Activated CD4-positive, alpha-beta T cell treated with anti-CD3 and anti-CD28 coated beads for 36 hours (primary cell): ENCODE measurements at regions of chr1 and their contacts with region 1.

Region 1: GRCh38 chr1:32817159-32817814 is at the starts of genes S100PBP and YARS1:
- DNase-seq: peak; percentile 100
- ATAC-seq: peak; percentile 96
- H3K4me3 Mint-ChIP-seq: peak within 1 kb of the TSS; percentile 97
- H3K27ac Mint-ChIP-seq: peak within 1 kb of the TSS; percentile 99
- H3K4me1 Mint-ChIP-seq: peaks cover 48% of the 10 kb centered on the region
- H3K27me3 Mint-ChIP-seq: no peaks in the 10 kb centered on the region
- total RNA-seq, gene S100PBP: 27.9 to 34.3 TPM
- total RNA-seq, gene YARS1: 259 to 309 TPM

Region 2: GRCh38 chr1:31644560-31645273 is 1172.6 kb before region 1 on chr1 and contains the start of gene PEF1:
- CTCF ChIA-PET with region 1: no interaction called
- POLR2A ChIA-PET with region 1: no interaction called
- intact Hi-C with region 1: loop called in 1 of 2 experiments (anchors 10 kb)
- DNase-seq: peak; percentile 100
- ATAC-seq: peak; percentile 91
- H3K4me3 Mint-ChIP-seq: peak within 1 kb of the TSS; percentile 95
- H3K27ac Mint-ChIP-seq: peak within 1 kb of the TSS; percentile 100
- H3K4me1 Mint-ChIP-seq: peaks cover 23% of the 10 kb centered on the region
- H3K27me3 Mint-ChIP-seq: no peaks in the 10 kb centered on the region
- total RNA-seq, gene PEF1: 48.8 to 59.3 TPM

Region 3: GRCh38 chr1:32221980-32222755 is 595.1 kb before region 1 on chr1 and contains the starts of genes EIF3I and TMEM234:
- CTCF ChIA-PET with region 1: no interaction called
- POLR2A ChIA-PET with region 1: no interaction called
- intact Hi-C with region 1: loop called in 1 of 2 experiments (anchors 1 kb)
- DNase-seq: peak; percentile 95
- ATAC-seq: peak; percentile 95
- H3K4me3 Mint-ChIP-seq: peak within 1 kb of the TSS; percentile 96
- H3K27ac Mint-ChIP-seq: peak within 1 kb of the TSS; percentile 97
- H3K4me1 Mint-ChIP-seq: peaks cover 29% of the 10 kb centered on the region
- H3K27me3 Mint-ChIP-seq: no peaks in the 10 kb centered on the region
- total RNA-seq, gene EIF3I: 299 to 349 TPM
- total RNA-seq, gene TMEM234: 7.3 to 8.2 TPM

Region 4: GRCh38 chr1:32351399-32352238 is 465.7 kb before region 1 on chr1:
- CTCF ChIA-PET with region 1: no interaction called
- POLR2A ChIA-PET with region 1: no interaction called
- intact Hi-C with region 1: loop called in 1 of 2 experiments (anchors 1 kb)
- DNase-seq: peak; percentile 96
- ATAC-seq: peak; percentile 96
- H3K4me3 Mint-ChIP-seq: peak overlapping the region; percentile 73
- H3K27ac Mint-ChIP-seq: peak overlapping the region; percentile 82
- H3K4me1 Mint-ChIP-seq: peaks cover 20% of the 10 kb centered on the region
- H3K27me3 Mint-ChIP-seq: no peaks in the 10 kb centered on the region

Region 5: GRCh38 chr1:32801096-32801715 is 16.1 kb before region 1 on chr1:
- CTCF ChIA-PET with region 1: no interaction called
- POLR2A ChIA-PET with region 1: interaction called, 4 read pairs
- intact Hi-C with region 1: loop called (anchors 1 kb)
- DNase-seq: peak; percentile 59
- ATAC-seq: peak; percentile 63
- H3K4me3 Mint-ChIP-seq: peak overlapping the region; percentile 49
- H3K27ac Mint-ChIP-seq: peak overlapping the region; percentile 69
- H3K4me1 Mint-ChIP-seq: peaks cover 56% of the 10 kb centered on the region
- H3K27me3 Mint-ChIP-seq: no peaks in the 10 kb centered on the region

Region 6: DNA sequence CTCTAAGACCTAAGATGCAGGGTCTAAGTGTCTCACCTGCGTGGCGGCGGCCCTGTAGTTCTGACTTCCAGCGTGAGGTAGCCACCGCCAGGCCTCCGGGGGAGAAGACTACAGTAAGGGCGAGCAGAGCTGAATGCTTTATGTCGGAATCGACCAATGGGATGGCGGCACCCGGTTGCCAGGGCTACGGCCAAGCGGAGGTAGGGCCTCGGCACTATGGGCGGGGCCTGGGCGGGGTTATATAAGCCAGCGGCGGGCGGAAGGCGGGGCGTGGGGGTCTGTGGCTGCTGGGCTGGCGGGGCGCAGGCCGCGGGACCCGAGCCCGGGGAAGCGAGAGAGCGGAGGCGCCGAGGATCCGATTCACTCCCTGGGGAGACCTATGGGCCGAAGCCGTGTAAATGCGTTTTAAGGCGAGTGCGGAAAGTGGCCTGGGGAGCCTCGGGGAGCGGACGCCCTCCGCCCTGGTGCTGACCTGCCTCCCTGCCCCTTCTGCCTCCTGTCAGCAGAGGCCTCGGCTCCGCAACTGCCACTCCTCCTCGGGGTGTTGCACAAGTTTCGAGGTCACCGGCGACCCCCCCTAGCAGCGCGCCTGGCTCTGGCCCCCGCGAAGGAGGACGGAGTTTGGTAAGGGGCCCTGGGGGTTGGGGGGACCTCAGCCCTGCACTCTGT is 263.7 kb after region 1 on chr1 and contains the start of gene AZIN2:
- CTCF ChIA-PET with region 1: no interaction called
- POLR2A ChIA-PET with region 1: no interaction called
- intact Hi-C with region 1: loop called in 1 of 2 experiments (anchors 1 kb)
- DNase-seq: peak; percentile 98
- ATAC-seq: peak; percentile 100
- H3K4me3 Mint-ChIP-seq: peak within 1 kb of the TSS; percentile 61
- H3K27ac Mint-ChIP-seq: peak within 1 kb of the TSS; percentile 43
- H3K4me1 Mint-ChIP-seq: peaks cover 17% of the 10 kb centered on the region
- H3K27me3 Mint-ChIP-seq: peaks cover 3% of the 10 kb centered on the region
- total RNA-seq, gene AZIN2: 0.98 to 2.1 TPM

Region 7: GRCh38 chr1:33147997-33148314 is 330.7 kb after region 1 on chr1:
- CTCF ChIA-PET with region 1: no interaction called
- POLR2A ChIA-PET with region 1: no interaction called
- intact Hi-C with region 1: no loop called
- DNase-seq: peak; percentile 25
- ATAC-seq: no peak
- H3K4me3 Mint-ChIP-seq: no peak overlapping the region
- H3K27ac Mint-ChIP-seq: no peak overlapping the region
- H3K4me1 Mint-ChIP-seq: no peaks in the 10 kb centered on the region
- H3K27me3 Mint-ChIP-seq: no peaks in the 10 kb centered on the region

Region 8: GRCh38 chr1:33349778-33350610 is 532.7 kb after region 1 on chr1:
- CTCF ChIA-PET with region 1: no interaction called
- POLR2A ChIA-PET with region 1: no interaction called
- intact Hi-C with region 1: loop called in 1 of 2 experiments (anchors 2 kb)
- DNase-seq: peak; percentile 87
- ATAC-seq: peak; percentile 87
- H3K4me3 Mint-ChIP-seq: peak overlapping the region; percentile 89
- H3K27ac Mint-ChIP-seq: peak overlapping the region; percentile 93
- H3K4me1 Mint-ChIP-seq: peaks cover 43% of the 10 kb centered on the region
- H3K27me3 Mint-ChIP-seq: no peaks in the 10 kb centered on the region